ENCODE measurements at regions of chr2 and their contacts with region 1.

Region 1: GRCh38 chr2:52810460-52810859 is 957.1 kb upstream of the CHAC2 start:
- DNase-seq: peak in 1 of 2 experiments; percentile 4
- H3K4me3 ChIP-seq: no peak overlapping the region
- H3K4me3 Mint-ChIP-seq: no peak overlapping the region
- H3K27ac Mint-ChIP-seq: no peak overlapping the region
- H3K4me1 ChIP-seq: no peaks in the 10 kb centered on the region
- H3K4me1 Mint-ChIP-seq: no peaks in the 10 kb centered on the region
- H3K27me3 ChIP-seq: no peaks in the 10 kb centered on the region
- H3K27me3 Mint-ChIP-seq: no peaks in the 10 kb centered on the region
- CTCF ChIP-seq: peak; percentile 31 to 45

Region 2: GRCh38 chr2:52861596-52861995 is 51.1 kb after region 1 on chr2:
- CTCF ChIA-PET with region 1: no interaction called
- POLR2A ChIA-PET with region 1: no interaction called
- intact Hi-C with region 1: no loop called
- DNase-seq: no peak
- H3K4me3 ChIP-seq: no peak overlapping the region
- H3K4me3 Mint-ChIP-seq: no peak overlapping the region
- H3K27ac Mint-ChIP-seq: no peak overlapping the region
- H3K4me1 ChIP-seq: no peaks in the 10 kb centered on the region
- H3K4me1 Mint-ChIP-seq: no peaks in the 10 kb centered on the region
- H3K27me3 ChIP-seq: no peaks in the 10 kb centered on the region
- H3K27me3 Mint-ChIP-seq: no peaks in the 10 kb centered on the region
- CTCF ChIP-seq: no peak

Region 3: DNA sequence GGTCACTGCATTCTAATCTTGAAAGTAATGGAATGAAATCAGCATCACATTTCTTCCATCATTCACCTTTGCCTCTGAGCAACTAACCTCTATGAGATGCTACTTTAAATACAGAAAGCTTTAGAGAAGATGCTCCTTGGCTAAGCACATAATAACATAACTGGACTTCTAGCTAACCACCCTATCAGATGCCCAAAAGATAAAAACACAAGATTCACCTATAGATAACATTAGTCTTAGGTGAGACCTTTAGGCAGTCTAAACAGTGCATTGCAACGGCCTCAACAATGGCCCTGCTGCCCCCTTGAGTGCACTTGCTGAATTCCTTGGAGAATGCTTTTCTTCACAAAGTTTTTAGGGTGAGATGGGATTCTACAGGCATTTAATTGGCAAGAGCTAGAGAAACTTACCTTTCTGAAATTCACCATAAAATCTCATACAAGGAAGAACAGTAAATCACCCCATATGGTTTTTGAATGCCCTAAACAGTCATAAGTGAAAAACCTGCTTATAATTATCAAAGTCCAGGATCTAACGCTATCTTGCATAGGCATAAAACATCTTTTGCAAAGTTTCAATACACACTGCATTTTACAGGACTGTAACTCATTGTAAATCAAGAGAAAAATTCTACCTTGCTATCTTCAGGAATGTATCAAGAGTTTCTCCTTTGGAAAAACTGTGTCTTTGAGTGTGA is 165.9 kb after region 1 on chr2:
- CTCF ChIA-PET with region 1: no interaction called
- POLR2A ChIA-PET with region 1: no interaction called
- intact Hi-C with region 1: loop called (anchors 1 kb)
- DNase-seq: peak; percentile 37 to 52
- H3K4me3 ChIP-seq: no peak overlapping the region
- H3K4me3 Mint-ChIP-seq: no peak overlapping the region
- H3K27ac Mint-ChIP-seq: no peak overlapping the region
- H3K4me1 ChIP-seq: no peaks in the 10 kb centered on the region
- H3K4me1 Mint-ChIP-seq: no peaks in the 10 kb centered on the region
- H3K27me3 ChIP-seq: no peaks in the 10 kb centered on the region
- H3K27me3 Mint-ChIP-seq: peaks cover 4% of the 10 kb centered on the region
- CTCF ChIP-seq: peak; percentile 44 to 57

Region 4: GRCh38 chr2:53210538-53210937 is 400.1 kb after region 1 on chr2:
- CTCF ChIA-PET with region 1: no interaction called
- POLR2A ChIA-PET with region 1: no interaction called
- intact Hi-C with region 1: loop called (anchors 2 kb)
- DNase-seq: no peak
- H3K4me3 ChIP-seq: no peak overlapping the region
- H3K4me3 Mint-ChIP-seq: no peak overlapping the region
- H3K27ac Mint-ChIP-seq: no peak overlapping the region
- H3K4me1 ChIP-seq: no peaks in the 10 kb centered on the region
- H3K4me1 Mint-ChIP-seq: no peaks in the 10 kb centered on the region
- H3K27me3 ChIP-seq: no peaks in the 10 kb centered on the region
- H3K27me3 Mint-ChIP-seq: no peaks in the 10 kb centered on the region
- CTCF ChIP-seq: no peak